ENCODE measurements at regions of chr2 and their contacts with region 1.

Region 1: DNA sequence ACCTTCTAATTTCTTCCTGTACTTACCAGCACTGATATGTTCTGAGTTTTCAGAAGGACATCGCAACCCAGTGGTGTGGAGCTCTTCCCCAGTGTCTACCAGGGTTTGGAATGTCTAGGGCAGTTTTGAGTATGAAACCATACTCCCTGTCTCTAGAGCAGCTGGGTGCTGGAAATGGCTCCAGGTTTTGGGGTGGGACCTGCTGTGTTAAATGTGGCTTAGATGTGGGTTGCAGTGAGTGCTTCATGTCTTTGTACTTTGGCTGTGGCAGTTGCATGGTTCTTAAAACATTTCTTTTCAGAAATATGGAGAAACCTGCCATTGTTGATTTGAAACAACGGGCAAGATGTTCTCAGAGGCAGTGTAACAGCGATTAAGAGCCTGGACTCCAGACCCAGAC is 48.5 kb downstream of the ACSL3 start:
- DNase-seq: no peak
- H3K4me3 ChIP-seq: no peak overlapping the region
- H3K4me3 Mint-ChIP-seq: no peak overlapping the region
- H3K27ac Mint-ChIP-seq: peak overlapping the region; percentile 18
- H3K4me1 ChIP-seq: no peaks in the 10 kb centered on the region
- H3K4me1 Mint-ChIP-seq: peaks cover 30% of the 10 kb centered on the region
- H3K27me3 ChIP-seq: no peaks in the 10 kb centered on the region
- H3K27me3 Mint-ChIP-seq: no peaks in the 10 kb centered on the region
- CTCF ChIP-seq: no peak

Region 2: DNA sequence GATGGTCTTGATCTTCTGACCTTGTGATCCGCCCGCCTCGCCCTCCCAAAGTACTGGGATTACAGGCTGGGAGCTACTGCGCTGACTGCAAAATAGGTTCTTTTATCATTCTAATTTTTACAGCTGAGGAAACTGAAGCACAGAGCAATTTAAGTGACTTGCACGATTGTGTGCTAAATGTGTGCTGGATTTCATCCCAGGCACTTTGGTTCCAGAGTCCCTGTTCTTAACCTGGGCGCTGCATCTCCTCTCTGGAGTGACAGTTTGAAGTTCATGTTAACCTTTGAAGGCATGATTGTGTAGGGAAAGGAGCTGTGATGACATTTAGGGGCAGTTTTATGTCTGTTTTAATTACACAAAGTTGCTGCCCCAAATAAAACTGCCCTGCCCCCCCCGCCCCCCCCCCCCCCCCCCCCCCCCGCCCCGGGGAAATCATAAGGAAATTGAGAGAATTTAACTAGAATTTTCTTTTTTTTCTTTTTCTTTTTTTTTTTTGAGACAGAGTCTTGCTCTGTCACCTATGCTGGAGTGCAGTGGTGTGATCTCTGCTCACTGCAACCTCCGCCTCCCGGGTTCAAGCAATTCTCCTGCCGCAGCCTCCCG is 42.8 kb before region 1 on chr2:
- CTCF ChIA-PET with region 1: no interaction called
- POLR2A ChIA-PET with region 1: interaction called, 12 read pairs
- intact Hi-C with region 1: no loop called
- DNase-seq: no peak
- H3K4me3 ChIP-seq: no peak overlapping the region
- H3K4me3 Mint-ChIP-seq: no peak overlapping the region
- H3K27ac Mint-ChIP-seq: no peak overlapping the region
- H3K4me1 ChIP-seq: peaks cover 62% of the 10 kb centered on the region
- H3K4me1 Mint-ChIP-seq: peaks cover 7% of the 10 kb centered on the region
- H3K27me3 ChIP-seq: no peaks in the 10 kb centered on the region
- H3K27me3 Mint-ChIP-seq: no peaks in the 10 kb centered on the region
- CTCF ChIP-seq: no peak

Region 3: GRCh38 chr2:223549215-223549614 is 639.9 kb after region 1 on chr2:
- CTCF ChIA-PET with region 1: no interaction called
- POLR2A ChIA-PET with region 1: no interaction called
- intact Hi-C with region 1: no loop called
- DNase-seq: no peak
- H3K4me3 ChIP-seq: no peak overlapping the region
- H3K4me3 Mint-ChIP-seq: no peak overlapping the region
- H3K27ac Mint-ChIP-seq: no peak overlapping the region
- H3K4me1 ChIP-seq: peaks cover 8% of the 10 kb centered on the region; the same call in 1 of the 2 replicates
- H3K4me1 Mint-ChIP-seq: peaks cover 5% of the 10 kb centered on the region
- H3K27me3 ChIP-seq: 0 out of 2 replicates have a peak, but pooled peaks cover 1% of the 10 kb centered on the region
- H3K27me3 Mint-ChIP-seq: no peaks in the 10 kb centered on the region
- CTCF ChIP-seq: no peak

Measured in Caco-2 (cell line).